GM13977 (cell line): ENCODE measurements at regions of chr10 and their contacts with region 1.

Region 1: GRCh38 chr10:66925896-66926715 is at the start of gene LRRTM3:
- DNase-seq: peak; percentile 72
- CTCF ChIP-seq: peak; percentile 71

Region 2: DNA sequence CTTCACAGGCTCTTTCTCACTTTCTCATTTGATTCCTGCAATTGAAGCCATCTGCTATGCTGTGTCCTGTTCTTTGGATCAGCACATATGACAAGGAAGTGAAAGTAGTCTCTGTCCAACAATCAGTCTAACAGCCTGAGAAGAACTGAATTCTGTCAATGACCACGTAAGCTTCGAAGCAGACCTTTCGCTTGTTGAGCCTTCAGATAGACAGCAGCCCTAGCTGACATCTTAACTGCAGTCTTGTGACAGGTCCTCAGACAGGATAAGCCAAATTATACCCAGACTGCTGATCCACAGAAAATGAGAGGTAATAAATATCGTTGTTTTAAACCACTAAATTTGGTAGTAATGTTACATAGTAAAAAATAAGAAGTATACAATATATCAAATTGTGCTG is 691.2 kb before region 1 on chr10:
- in situ Hi-C with region 1: loop called (anchors 25 kb)
- DNase-seq: no peak
- CTCF ChIP-seq: no peak

Region 3: DNA sequence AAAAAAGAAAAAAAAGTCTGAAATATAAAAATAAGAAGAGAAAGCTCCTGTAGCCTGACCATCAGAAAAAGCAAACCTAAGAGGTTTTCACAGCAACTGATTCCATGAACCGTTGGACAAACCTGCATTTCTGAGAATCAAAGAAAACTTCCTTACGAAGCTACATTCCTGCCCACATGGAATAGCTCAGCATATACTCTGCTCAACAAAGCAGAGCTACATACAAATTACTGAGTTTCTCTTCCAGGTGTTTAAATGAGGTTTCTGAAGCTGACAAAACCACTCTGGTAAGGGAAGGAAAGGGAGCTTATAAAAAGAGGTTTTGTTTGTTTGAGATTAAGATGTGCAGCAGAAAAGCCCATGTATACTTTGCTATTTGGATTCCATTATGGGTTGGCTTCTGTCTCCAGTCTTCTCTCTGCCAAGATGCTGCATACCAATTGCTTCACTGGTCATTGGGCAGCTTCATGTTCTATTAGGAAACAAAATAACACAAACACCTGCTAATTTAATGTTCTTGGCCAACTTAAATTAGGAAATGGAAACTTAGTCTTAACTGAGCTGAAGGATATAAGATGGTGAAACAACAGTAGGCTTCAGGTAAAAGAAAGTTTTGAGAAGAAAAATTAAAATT is 313.9 kb after region 1 on chr10:
- in situ Hi-C with region 1: no loop called
- DNase-seq: no peak
- CTCF ChIP-seq: no peak